MCF 10A (cell line): ENCODE measurements at regions of chr7 and their contacts with region 1.

Region 1: DNA sequence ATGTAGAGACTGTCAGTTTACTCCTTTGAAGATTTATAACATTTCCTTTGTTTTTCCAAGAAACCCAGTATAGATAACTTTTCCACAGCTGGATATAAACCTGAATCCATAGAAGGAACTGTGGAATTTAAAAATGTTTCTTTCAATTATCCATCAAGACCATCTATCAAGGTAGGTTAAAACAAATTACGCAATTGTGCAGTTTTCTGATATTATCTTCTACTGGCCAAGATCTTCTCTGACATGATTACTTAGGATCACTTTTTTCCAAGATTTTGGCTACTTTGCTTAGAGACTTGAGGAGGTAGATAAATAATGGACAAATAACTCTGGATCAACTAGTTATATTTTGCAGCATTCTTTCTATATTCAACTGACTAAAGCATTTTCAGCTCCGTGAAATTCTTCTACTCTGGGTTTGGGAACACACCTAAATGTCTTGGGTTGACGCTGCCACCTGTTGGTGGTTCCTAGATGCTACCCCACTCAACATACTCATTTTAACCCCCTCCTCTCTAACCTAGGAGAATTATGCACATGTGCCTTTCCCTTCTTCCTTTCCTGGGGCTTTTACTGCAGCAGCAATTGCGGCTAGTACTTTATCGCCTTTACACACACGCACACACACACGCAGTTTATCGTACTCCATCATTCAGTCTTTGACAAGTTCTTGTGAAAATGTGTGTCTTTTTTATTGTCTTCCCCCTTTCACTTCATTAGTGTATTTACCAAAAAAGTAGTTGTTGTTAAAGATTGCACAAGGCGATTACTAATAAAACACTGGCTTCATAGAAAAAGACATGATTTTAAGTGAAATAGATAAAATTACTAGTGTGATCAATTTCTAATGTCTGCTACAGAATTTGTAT is 32.7 kb downstream of the ABCB5 start:
- DNase-seq: peak; percentile 64
- H3K4me3 Mint-ChIP-seq: no peak overlapping the region
- H3K27ac Mint-ChIP-seq: no peak overlapping the region
- H3K4me1 Mint-ChIP-seq: peaks cover 5% of the 10 kb centered on the region
- H3K27me3 Mint-ChIP-seq: no peaks in the 10 kb centered on the region
- CTCF ChIP-seq: peak; percentile 51

Region 2: GRCh38 chr7:19708397-19709248 is 939.5 kb before region 1 on chr7 and contains the start of gene POLR1F:
- CTCF ChIA-PET with region 1: interaction called, 68 read pairs
- POLR2A ChIA-PET with region 1: interaction called, 3 read pairs
- intact Hi-C with region 1: loop called (anchors 2 kb)
- DNase-seq: peak; percentile 96
- H3K4me3 Mint-ChIP-seq: peak within 1 kb of the TSS; percentile 97
- H3K27ac Mint-ChIP-seq: peak within 1 kb of the TSS; percentile 94
- H3K4me1 Mint-ChIP-seq: peaks cover 38% of the 10 kb centered on the region
- H3K27me3 Mint-ChIP-seq: no peaks in the 10 kb centered on the region
- CTCF ChIP-seq: peak; percentile 85
- total RNA-seq, gene POLR1F: 21.4 and 22.8 TPM in 2 replicates

Region 3: GRCh38 chr7:19713676-19714075 is 934.5 kb before region 1 on chr7:
- CTCF ChIA-PET with region 1: interaction called, 68 read pairs
- POLR2A ChIA-PET with region 1: interaction called, 3 read pairs
- intact Hi-C with region 1: loop called (anchors 2 kb)
- DNase-seq: peak; percentile 58
- H3K4me3 Mint-ChIP-seq: no peak overlapping the region
- H3K27ac Mint-ChIP-seq: no peak overlapping the region
- H3K4me1 Mint-ChIP-seq: peaks cover 16% of the 10 kb centered on the region
- H3K27me3 Mint-ChIP-seq: no peaks in the 10 kb centered on the region
- CTCF ChIP-seq: peak; percentile 47

Region 4: DNA sequence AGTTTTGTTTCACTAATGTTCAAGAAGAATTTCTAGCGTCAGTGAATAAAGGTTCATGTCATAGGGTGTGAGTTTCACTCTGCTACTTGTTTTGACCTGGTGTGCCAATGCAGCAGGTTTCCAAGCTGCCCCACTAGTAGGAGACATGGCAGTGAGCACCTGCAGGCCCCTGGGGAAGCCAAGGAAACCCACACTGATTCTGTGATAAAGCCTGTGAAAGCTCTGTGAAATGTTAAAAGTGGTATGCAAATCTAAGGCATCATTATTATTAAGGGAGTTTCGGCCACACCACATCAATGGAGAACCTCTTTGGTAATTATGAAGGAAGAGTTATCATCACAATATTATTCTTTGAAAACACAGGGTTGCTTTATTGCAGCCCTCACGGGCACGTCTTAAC is 13.7 kb after region 1 on chr7:
- CTCF ChIA-PET with region 1: interaction called, 12 read pairs
- POLR2A ChIA-PET with region 1: no interaction called
- intact Hi-C with region 1: no loop called
- DNase-seq: no peak
- H3K4me3 Mint-ChIP-seq: no peak overlapping the region
- H3K27ac Mint-ChIP-seq: no peak overlapping the region
- H3K4me1 Mint-ChIP-seq: no peaks in the 10 kb centered on the region
- H3K27me3 Mint-ChIP-seq: no peaks in the 10 kb centered on the region
- CTCF ChIP-seq: no peak

Region 5: DNA sequence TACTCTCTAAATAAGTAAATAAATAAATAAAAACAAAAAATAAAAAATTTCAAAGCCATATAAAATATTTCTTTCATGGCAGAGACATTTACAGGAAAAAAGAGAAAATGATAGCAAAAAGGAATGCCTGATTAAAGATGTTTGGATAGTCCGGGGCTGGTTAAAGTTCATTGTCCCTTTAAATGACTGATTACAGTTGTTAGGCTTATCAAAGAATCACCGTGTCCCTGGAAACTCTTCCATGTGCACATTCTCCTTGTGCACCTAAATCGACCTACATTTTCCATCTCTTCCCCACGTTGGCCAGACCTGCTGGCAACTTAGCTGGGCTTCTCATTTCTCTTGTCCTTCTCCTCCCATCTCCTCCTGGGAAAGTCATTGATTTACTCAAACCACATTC is 36.4 kb after region 1 on chr7:
- CTCF ChIA-PET with region 1: interaction called, 10 read pairs
- POLR2A ChIA-PET with region 1: no interaction called
- intact Hi-C with region 1: no loop called
- DNase-seq: no peak
- H3K4me3 Mint-ChIP-seq: no peak overlapping the region
- H3K27ac Mint-ChIP-seq: no peak overlapping the region
- H3K4me1 Mint-ChIP-seq: no peaks in the 10 kb centered on the region
- H3K27me3 Mint-ChIP-seq: no peaks in the 10 kb centered on the region
- CTCF ChIP-seq: no peak